Activated naive CD4-positive, alpha-beta T cell treated with anti-CD3 and anti-CD28 coated beads, Interleukin-2, amount 10 ng/mL, durations not matched to agents 7 days and 5 days (primary cell): ENCODE measurements at regions of chr2 and their contacts with region 1.

Region 1: DNA sequence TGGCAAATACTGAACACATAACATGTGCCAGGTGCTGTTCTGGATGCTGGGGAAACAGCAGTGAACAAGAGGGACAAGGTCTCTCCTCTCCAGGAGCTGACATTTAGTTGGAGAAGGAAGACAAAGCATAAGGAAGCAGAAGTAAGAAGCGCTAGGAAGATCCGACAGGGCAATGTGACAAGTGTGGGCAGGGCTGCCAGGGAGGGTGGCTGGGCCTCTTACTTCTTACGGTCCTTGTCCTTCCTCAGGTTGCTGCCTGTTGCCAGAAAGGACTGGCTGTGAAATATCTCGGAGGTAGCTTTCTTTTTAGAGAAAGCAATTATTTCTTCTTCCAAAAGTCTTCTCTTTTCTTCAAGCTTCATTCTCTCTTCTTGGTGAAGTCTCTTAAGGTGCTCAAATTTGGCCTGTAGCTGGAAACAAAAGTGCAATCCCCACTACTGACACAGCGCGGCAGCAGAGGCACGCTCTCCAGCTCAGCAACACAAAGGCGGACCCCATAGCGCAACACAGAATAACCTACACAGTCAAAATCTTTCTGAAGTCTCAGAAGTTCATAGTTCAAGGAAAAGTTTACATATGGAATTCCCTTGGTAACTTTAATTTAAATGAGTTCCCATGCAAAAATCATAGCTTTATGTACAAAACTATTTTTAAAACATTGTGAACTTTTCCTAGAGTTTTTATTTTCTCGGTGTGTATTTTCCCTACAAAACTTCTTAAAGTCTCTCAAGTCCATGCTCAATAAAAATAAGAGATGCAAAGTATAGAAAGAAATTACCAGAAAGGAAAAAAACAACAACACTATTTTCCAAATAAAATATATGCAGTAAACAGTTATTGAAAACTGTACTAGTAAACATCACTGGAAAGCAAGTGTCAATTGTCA is 67.7 kb downstream of the SEPTIN10 start:
- DNase-seq: peak; percentile 68
- H3K4me3 Mint-ChIP-seq: no peak overlapping the region
- H3K27ac Mint-ChIP-seq: no peak overlapping the region
- H3K4me1 Mint-ChIP-seq: no peaks in the 10 kb centered on the region
- H3K27me3 Mint-ChIP-seq: peaks cover 18% of the 10 kb centered on the region

Region 2: GRCh38 chr2:109533823-109534222 is 12.2 kb before region 1 on chr2:
- CTCF ChIA-PET with region 1: interaction called, 11 read pairs
- DNase-seq: no peak
- H3K4me3 Mint-ChIP-seq: no peak overlapping the region
- H3K27ac Mint-ChIP-seq: no peak overlapping the region
- H3K4me1 Mint-ChIP-seq: no peaks in the 10 kb centered on the region
- H3K27me3 Mint-ChIP-seq: peaks cover 51% of the 10 kb centered on the region

Region 3: GRCh38 chr2:109586687-109587086 is 40.6 kb after region 1 on chr2:
- CTCF ChIA-PET with region 1: interaction called, 10 read pairs
- DNase-seq: no peak
- H3K4me3 Mint-ChIP-seq: no peak overlapping the region
- H3K27ac Mint-ChIP-seq: no peak overlapping the region
- H3K4me1 Mint-ChIP-seq: no peaks in the 10 kb centered on the region
- H3K27me3 Mint-ChIP-seq: peaks cover 8% of the 10 kb centered on the region

Region 4: GRCh38 chr2:109736177-109736827 is 190.2 kb after region 1 on chr2:
- CTCF ChIA-PET with region 1: interaction called, 14 read pairs
- DNase-seq: peak; percentile 42
- H3K4me3 Mint-ChIP-seq: no peak overlapping the region
- H3K27ac Mint-ChIP-seq: no peak overlapping the region
- H3K4me1 Mint-ChIP-seq: no peaks in the 10 kb centered on the region
- H3K27me3 Mint-ChIP-seq: peaks cover 23% of the 10 kb centered on the region